Calu3 (cell line): ENCODE measurements at regions of chr1 and their contacts with region 1.

Region 1: DNA sequence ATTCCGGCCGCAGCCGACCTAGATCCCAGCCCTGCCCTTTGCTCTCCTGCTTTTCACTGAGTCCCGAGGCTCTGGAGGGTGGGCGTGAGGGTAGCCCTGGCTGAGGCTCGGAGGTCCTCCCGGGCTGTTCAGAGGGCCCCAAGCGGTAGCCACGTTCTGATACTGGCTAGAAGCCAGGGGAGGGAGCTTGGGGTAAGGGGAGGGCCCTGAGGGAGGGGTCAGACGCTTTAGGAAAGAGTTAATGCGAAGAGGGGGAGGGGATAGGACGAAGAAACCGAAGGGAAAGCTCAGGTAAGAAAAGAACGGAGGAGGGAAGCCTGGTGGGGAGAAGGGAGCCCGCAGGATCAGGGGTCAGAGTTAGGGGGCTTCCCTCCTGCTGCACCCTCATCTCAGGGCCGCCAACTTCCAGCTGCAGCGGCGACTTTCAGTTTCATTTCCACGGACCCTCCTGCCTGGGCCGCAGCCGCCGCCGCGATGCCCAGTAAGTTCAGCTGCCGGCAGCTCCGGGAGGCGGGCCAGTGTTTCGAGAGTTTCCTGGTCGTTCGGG is at the start of gene MOV10:
- DNase-seq: peak; percentile 48
- H3K4me3 Mint-ChIP-seq: peak within 1 kb of the TSS; percentile 90
- H3K27ac Mint-ChIP-seq: peak within 1 kb of the TSS; percentile 94
- H3K4me1 Mint-ChIP-seq: peaks cover 23% of the 10 kb centered on the region
- H3K27me3 Mint-ChIP-seq: no peaks in the 10 kb centered on the region
- CTCF ChIP-seq: no peak
- total RNA-seq, gene MOV10: 71.4 and 80.0 TPM in 2 replicates

Region 2: DNA sequence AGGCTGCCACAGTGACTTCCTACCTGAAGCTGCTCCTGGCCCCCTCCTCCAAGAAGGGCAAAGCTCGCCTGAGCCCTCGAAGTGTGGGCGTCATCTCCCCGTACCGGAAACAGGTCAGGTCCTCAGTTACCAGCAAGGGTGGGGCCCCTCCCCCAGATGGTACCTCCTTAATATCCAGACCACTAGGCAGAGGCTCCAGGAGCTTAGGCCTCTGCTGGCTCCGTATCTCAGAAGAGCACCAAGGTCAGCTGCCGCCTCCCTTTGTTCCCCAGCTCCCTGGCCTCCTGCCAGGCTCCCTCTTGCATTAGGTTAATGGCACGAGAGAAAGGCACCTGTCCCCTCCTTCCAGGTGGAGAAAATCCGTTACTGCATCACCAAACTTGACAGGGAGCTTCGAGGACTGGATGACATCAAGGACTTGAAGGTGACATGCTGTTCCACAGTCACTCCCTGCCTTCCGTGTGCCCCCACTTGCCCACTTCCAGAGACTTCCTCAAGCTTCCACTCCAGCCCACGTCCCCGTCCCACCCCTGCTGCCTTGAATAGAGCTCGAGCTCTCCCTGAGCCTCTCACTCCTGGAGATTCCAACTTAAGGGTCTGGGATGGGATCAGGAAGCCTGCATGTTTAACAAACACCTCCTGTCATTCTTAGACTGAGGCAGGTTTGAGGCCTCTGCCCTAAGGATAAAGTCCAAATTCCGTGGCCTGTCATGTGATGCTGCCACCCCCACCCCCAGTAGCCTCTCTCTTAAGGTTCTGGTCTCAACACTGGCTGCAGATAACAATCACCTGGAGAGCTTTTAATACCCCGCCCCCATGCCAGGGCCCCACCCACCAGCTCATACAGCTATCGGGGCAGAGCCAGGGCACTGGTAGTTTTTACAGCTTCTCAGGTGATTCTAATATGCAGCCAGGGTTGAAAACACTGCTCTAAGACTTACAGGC is 24.1 kb after region 1 on chr1:
- CTCF ChIA-PET with region 1: interaction called, 10 read pairs
- intact Hi-C with region 1: no loop called
- DNase-seq: peak; percentile 69
- H3K4me3 Mint-ChIP-seq: peak overlapping the region; percentile 21
- H3K27ac Mint-ChIP-seq: peak overlapping the region; percentile 69
- H3K4me1 Mint-ChIP-seq: peaks cover 39% of the 10 kb centered on the region
- H3K27me3 Mint-ChIP-seq: no peaks in the 10 kb centered on the region
- CTCF ChIP-seq: no peak